HEK293 (cell line): ENCODE measurements at regions of chr10 and their contacts with region 1.

Region 1: DNA sequence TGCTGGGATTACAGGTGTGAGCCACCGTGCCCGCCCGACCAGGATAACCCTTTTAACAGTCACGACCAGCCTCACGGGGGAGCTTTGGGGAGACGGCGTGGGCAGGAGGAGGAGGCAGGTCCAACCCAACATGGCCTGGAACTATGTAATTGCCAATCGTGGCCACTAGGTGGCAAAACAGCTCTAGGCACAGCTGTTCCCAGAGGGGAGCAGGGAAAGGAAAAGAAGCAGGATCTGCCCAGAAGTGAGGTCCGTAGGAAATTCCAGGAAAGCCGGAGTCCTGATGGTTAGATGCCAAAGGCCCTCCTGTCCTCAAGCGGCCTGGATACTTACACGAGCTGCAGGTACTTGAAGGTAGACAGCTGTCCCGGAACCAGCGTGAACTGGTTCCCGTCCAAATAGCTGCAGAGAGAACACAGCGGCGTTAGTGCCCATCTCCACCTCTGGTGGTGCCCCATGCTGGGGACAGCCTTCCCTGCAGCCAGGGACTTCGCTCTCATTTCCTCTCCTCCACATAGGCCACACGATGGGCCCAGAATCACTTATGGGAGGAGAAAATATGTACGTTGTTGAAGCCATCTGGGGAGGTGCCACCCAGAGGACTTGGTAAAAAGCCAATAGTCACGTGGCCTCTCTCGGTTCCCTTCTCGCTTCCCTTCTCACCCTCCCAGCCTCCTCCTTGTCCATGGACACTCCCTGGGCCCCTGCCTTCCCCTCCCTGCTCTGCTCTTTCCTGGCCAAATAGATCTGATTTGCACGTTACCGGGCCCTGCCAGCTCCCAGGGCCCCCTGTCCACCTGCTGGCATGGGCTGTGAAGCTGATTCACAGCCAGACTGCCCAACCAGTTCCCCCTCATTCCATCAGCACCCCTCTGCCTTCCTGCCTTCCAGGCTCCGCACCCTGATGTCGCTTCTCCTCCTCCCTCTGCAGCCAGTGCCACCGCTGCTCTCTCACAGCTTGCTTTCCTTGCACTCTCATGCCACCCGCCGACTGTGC is 148.1 kb downstream of the SLIT1 start:
- H3K4me3 ChIP-seq: no peak overlapping the region
- H3K27ac ChIP-seq: no peak overlapping the region
- H3K4me1 ChIP-seq: no peaks in the 10 kb centered on the region
- CTCF ChIP-seq: peak; percentile 96

Region 2: DNA sequence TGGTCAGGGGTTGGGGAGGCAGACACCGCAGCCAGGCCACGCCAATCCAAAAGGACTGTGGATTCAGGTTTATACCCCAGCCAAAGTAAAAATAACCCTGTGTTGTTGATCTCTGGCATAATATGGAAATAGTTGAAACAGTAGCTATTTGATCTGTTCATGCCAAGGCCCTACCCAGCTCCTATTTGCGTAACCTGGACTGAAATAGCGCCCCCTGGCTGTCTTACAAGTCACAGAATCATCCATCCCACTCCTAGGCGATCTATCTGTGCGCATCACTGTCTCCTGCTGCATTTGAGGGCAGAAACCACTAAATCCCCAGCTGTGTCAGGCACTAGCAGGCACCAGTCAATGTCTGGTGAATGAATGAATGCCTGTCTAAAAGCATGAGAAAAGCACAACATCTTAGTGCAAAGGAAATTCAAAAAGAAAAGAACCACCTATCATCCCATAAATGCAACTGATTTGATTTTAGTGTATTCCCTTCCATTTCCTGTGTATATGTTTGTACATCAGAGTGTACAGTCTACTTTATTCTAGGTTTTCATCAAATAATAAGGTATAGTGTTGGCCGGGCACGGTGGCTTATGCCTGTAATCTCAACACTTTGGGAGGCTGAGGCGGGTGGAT is 11.9 kb before region 1 on chr10:
- CTCF ChIA-PET with region 1: interaction called, 73 read pairs
- POLR2A ChIA-PET with region 1: no interaction called
- H3K4me3 ChIP-seq: no peak overlapping the region
- H3K27ac ChIP-seq: no peak overlapping the region
- H3K4me1 ChIP-seq: peaks cover 11% of the 10 kb centered on the region; the same call in 1 of the 2 replicates
- CTCF ChIP-seq: peak; percentile 38; the same call in 1 of the 2 replicates

Region 3: DNA sequence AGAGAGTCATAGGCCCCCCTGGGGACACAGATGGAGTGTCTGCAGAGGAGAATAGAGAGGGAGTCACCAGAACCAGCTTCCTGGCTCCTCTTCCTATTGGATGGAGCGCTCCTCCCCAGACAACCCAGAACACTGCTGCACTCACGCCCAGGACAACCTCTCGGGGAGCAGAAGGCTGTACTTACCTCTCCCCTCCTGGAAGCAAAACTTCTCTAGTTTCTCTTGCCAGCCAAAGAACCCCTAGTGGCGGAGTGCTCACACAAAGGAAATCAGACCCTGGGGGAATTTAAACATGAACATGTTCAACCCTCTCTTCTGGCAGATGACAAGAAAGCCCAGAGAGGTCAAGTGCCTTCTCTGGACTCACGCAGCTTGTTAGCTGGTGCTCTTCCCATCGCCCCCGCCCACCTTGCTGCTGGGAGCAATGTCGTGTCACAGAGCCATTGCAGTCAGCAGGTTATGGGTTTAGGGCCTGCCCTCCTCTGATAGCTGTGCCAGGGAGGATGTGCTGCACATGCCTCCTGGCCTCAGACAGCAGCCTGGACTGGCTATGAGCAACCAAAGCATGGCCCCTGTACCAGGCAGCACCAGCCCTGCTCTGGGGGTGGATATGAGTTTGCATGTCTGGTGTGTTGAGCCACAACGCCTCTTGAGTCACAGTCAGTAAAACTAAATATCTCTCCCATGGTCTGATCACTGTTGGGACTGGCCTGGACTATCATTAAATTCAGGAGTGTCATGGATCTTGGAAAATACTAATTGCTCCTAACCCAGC is 63.7 kb after region 1 on chr10:
- CTCF ChIA-PET with region 1: no interaction called
- POLR2A ChIA-PET with region 1: no interaction called
- H3K4me3 ChIP-seq: no peak overlapping the region
- H3K27ac ChIP-seq: no peak overlapping the region
- H3K4me1 ChIP-seq: no peaks in the 10 kb centered on the region
- CTCF ChIP-seq: no peak

Region 4: GRCh38 chr10:97128039-97128492 is 90.4 kb after region 1 on chr10:
- CTCF ChIA-PET with region 1: no interaction called
- POLR2A ChIA-PET with region 1: no interaction called
- H3K4me3 ChIP-seq: no peak overlapping the region
- H3K27ac ChIP-seq: no peak overlapping the region
- H3K4me1 ChIP-seq: no peaks in the 10 kb centered on the region
- CTCF ChIP-seq: no peak